Spleen (tissue), 13 donors: ENCODE measurements at regions of chr2 and their contacts with region 1.

Region 1: GRCh38 chr2:118197011-118197675 is 108.9 kb downstream of the INSIG2 start:
- DNase-seq: no peak
- H3K4me3 ChIP-seq: no peak overlapping the region
- H3K27ac ChIP-seq: no peak overlapping the region
- H3K4me1 ChIP-seq: no peaks in the 10 kb centered on the region
- H3K27me3 ChIP-seq: peaks cover 0 to 15% (median 0%) of the 10 kb centered on the region in 7 donors
- CTCF ChIP-seq: no peak
- POLR2A ChIP-seq: no peak

Region 2: GRCh38 chr2:117814417-117815264 is 382.5 kb before region 1 on chr2 and contains the start of gene DDX18:
- intact Hi-C with region 1: loop called (anchors 10 kb)
- DNase-seq: peak; percentile 98
- H3K4me3 ChIP-seq: peak within 1 kb of the TSS; percentile 53 to 92 (median 80)
- H3K27ac ChIP-seq: peak within 1 kb of the TSS; percentile 82 to 97 (median 92)
- H3K4me1 ChIP-seq: peaks cover 13 to 49% (median 35%) of the 10 kb centered on the region in 6 donors
- H3K27me3 ChIP-seq: no peaks in the 10 kb centered on the region
- CTCF ChIP-seq: peak; percentile 97 to 100 (median 99)
- POLR2A ChIP-seq: no peak
- total RNA-seq, gene DDX18: 48.4 to 81.2 (median 57.2) TPM

Region 3: GRCh38 chr2:117980783-117981676 is 216.1 kb before region 1 on chr2:
- intact Hi-C with region 1: no loop called
- DNase-seq: peak; percentile 34
- H3K4me3 ChIP-seq: no peak overlapping the region
- H3K27ac ChIP-seq: peak overlapping the region in 3 of 8 donors; percentile 5 to 41 (median 12)
- H3K4me1 ChIP-seq: peaks cover 0 to 20% (median 6%) of the 10 kb centered on the region in 6 donors
- H3K27me3 ChIP-seq: no peaks in the 10 kb centered on the region
- CTCF ChIP-seq: no peak
- POLR2A ChIP-seq: no peak

Region 4: DNA sequence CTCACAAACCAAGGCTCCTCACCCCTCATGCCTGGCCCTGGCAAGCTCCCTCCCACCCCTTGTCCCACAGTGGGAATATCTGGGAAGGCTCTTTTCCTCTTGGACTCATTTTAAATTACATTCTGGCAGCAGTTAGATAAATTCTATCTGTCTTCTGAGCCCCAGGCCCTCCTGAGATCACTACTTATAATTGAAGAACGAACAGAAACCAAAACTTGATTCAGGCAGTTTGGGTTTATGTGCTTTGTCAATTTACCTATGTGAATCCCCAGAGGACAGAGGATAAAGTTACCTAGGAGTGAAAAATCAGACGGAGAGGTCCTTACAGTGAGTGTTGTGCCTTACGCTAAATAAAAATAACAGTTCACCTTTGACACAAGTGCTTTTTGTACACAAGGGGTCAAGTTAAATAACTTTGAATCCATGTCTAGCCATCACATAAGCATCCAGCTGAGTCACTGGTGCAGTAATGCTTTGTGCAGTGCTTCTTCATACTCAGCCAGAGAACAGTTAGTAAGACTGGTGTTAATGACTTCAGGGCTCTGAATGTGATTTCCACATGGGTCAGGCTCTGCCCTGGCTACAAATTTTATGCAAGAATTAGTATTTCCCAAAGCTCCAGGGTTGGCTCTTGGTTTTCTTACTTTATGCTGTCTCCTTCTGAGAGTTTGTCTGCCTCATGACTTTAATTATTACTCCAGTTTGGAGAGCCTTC is 220.4 kb after region 1 on chr2:
- intact Hi-C with region 1: no loop called
- DNase-seq: no peak
- H3K4me3 ChIP-seq: no peak overlapping the region
- H3K27ac ChIP-seq: no peak overlapping the region
- H3K4me1 ChIP-seq: no peaks in the 10 kb centered on the region
- H3K27me3 ChIP-seq: peaks cover 0 to 5% (median 0%) of the 10 kb centered on the region in 7 donors
- CTCF ChIP-seq: no peak
- POLR2A ChIP-seq: no peak